Sigmoid colon (tissue), 7 donors: ENCODE measurements at regions of chr5 and their contacts with region 1.

Region 1: DNA sequence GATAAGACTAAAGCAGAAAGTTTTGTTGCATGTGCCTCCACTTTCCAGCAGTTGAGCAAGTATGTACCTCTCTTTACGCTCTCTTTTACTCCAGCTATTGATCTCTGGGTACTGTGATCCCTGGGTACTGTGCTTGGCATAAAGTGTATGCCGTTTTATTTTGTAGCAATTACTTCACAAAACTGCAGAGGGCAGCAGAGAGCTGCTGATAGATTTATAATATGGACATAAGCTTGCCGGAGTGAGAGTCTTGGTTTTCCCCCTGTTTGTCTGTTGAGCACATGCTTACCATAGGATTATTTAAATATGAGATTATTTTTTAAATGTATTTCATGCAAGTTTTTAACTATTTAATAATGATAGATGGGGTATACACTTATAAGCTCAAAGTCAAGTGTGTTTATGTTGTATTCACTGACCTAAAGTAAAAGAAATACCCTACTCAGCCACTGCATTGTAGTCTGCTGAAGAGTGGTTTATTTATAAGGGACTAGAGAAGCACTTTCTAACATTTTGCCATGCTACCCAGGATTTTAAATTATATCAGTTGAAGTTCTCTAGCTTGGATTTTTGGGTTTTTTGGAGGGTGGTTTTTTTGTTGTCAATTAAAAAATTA is 13.0 kb downstream of the TTC1 start:
- DNase-seq: no peak
- H3K4me3 ChIP-seq: no peak overlapping the region
- H3K27ac ChIP-seq: no peak overlapping the region
- H3K4me1 ChIP-seq: peaks cover 0 to 18% (median 8%) of the 10 kb centered on the region in 4 donors
- H3K27me3 ChIP-seq: no peaks in the 10 kb centered on the region
- CTCF ChIP-seq: peak; percentile 61 to 78 (median 74)
- EP300 ChIP-seq: no peak
- POLR2A ChIP-seq: no peak

Region 2: GRCh38 chr5:160071516-160071915 is 49.6 kb after region 1 on chr5:
- intact Hi-C with region 1: no loop called
- DNase-seq: no peak
- H3K4me3 ChIP-seq: no peak overlapping the region
- H3K27ac ChIP-seq: no peak overlapping the region
- H3K4me1 ChIP-seq: no peaks in the 10 kb centered on the region
- H3K27me3 ChIP-seq: no peaks in the 10 kb centered on the region
- CTCF ChIP-seq: no peak
- EP300 ChIP-seq: no peak
- POLR2A ChIP-seq: no peak

Region 3: DNA sequence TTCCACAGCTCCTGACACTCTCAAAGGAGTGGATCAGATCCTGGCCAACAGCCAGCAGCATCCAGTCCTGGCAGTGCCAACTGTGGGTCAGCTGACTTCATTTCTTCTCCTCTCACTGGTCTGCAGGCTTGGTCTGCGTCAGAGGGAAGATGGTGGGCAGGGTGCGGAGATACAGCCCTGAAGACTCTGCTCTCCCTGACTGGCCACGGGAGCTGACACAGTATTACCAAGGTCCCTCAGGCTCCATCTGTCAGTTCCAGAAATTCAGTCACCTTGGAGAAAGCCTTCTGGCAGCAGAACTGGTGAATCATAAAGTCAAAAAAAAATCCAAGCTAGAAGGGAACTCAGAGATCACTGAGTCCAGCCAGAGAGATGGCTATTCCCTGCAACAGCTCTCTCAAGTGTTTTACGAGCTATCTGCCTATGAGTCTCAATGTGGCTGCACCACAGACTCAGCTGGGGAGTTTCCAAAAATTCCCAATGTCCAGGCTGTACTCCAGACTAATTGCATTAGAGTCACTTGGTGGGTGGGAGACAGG is 320.5 kb after region 1 on chr5:
- intact Hi-C with region 1: loop called (anchors 1 kb)
- DNase-seq: peak; percentile 60
- H3K4me3 ChIP-seq: no peak overlapping the region
- H3K27ac ChIP-seq: no peak overlapping the region
- H3K4me1 ChIP-seq: peaks cover 0 to 5% (median 4%) of the 10 kb centered on the region in 4 donors
- H3K27me3 ChIP-seq: no peaks in the 10 kb centered on the region
- CTCF ChIP-seq: no peak
- EP300 ChIP-seq: no peak
- POLR2A ChIP-seq: no peak